ENCODE measurements at regions of chr6 and their contacts with region 1.

Region 1: DNA sequence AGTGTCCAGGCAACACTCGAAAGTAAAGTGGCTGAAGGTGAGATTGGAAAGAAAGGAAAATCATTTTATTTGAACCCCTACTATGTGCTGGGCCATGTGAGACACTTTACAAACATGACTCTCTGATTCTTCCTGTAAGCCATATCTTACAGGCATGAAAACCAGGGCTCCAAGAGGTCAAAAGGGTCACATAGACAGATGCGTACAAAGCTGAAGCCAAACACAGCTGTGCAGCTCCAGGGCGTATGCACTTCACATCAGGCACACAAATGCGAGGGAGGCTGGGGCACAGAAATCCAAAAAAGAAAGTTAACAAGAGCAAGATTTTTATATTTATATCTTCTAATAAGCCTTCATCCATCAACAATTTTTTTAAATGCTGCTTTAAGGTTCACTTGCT is 176.5 kb downstream of the PHACTR1 start:
- DNase-seq: no peak

Region 2: DNA sequence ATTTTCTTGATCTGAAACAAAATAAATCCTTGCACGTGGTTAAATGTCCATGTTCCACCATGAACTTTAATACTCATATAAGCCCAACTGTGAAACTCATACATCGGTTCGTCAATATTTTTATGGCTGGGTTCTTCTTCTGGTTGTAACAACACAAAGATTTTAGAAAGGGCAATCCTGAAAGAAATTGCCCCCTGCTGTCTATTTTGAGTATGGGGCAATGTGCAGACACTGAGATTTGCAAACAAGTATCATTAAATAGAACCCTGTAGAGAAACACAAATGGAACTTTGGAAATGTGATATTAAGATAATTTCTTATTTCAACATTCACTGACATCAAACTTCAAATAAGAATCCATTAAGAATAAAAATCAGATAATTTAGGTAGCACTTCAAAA is 256.7 kb before region 1 on chr6:
- CTCF ChIA-PET with region 1: interaction called, 10 read pairs
- POLR2A ChIA-PET with region 1: no interaction called
- DNase-seq: no peak